A549 (cell line): ENCODE measurements at regions of chr5 and their contacts with region 1.

Region 1: GRCh38 chr5:159106569-159107282 is 7.0 kb upstream of the EBF1 start:
- DNase-seq: peak; percentile 73 to 90
- ATAC-seq: peak; percentile 89 to 94
- H3K4me3 ChIP-seq: peak overlapping the region; percentile 29
- H3K27ac ChIP-seq: peak overlapping the region in 1 of 2 experiments; percentile 46; a peak in 3 of 6 replicates
- H3K4me1 ChIP-seq: no peaks in the 10 kb centered on the region; the same call in 1 of the 3 replicates
- CTCF ChIP-seq: peak; percentile 97
- EP300 ChIP-seq: no peak
- POLR2A ChIP-seq: no peak
- RAD21 ChIP-seq: peak; percentile 97 to 99

Region 2: GRCh38 chr5:158007336-158007735 is 1099.4 kb before region 1 on chr5:
- CTCF ChIA-PET with region 1: interaction called, 16 read pairs
- POLR2A ChIA-PET with region 1: no interaction called
- DNase-seq: no peak
- ATAC-seq: no peak; a peak in 1 of 6 replicates
- H3K4me3 ChIP-seq: no peak overlapping the region
- H3K27ac ChIP-seq: no peak overlapping the region
- H3K4me1 ChIP-seq: no peaks in the 10 kb centered on the region
- CTCF ChIP-seq: no peak
- EP300 ChIP-seq: no peak
- POLR2A ChIP-seq: no peak
- RAD21 ChIP-seq: no peak

Region 3: DNA sequence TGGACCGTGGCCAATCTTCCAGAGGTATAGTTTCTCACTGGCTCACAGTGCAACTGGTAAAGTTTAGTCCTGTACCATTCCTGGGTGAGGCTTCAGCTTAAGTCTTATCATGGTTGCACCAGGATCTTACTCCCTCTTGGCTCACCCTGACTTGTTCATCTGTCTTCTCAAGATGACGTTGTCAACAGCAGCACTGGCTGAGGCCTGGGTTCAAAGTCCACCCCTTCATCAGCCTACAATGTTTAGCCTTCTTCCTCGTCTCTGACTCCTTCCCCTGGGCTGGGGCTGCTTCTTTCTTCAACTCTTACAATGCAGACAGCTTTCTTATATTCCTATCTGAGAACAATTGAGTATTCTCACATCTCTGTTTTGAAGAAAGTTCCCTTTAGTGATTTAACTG is 936.7 kb before region 1 on chr5:
- CTCF ChIA-PET with region 1: interaction called, 49 read pairs
- POLR2A ChIA-PET with region 1: no interaction called
- DNase-seq: peak in 1 of 2 experiments; percentile 18
- ATAC-seq: peak in 1 of 2 experiments; percentile 28; a peak in 2 of 6 replicates
- H3K4me3 ChIP-seq: no peak overlapping the region
- H3K27ac ChIP-seq: no peak overlapping the region
- H3K4me1 ChIP-seq: no peaks in the 10 kb centered on the region
- CTCF ChIP-seq: no peak
- EP300 ChIP-seq: no peak
- POLR2A ChIP-seq: no peak
- RAD21 ChIP-seq: no peak

Region 4: GRCh38 chr5:158679221-158679641 is 427.5 kb before region 1 on chr5:
- CTCF ChIA-PET with region 1: interaction called, 10 read pairs
- POLR2A ChIA-PET with region 1: no interaction called
- DNase-seq: no peak
- ATAC-seq: no peak
- H3K4me3 ChIP-seq: no peak overlapping the region
- H3K27ac ChIP-seq: no peak overlapping the region
- H3K4me1 ChIP-seq: no peaks in the 10 kb centered on the region
- CTCF ChIP-seq: no peak
- EP300 ChIP-seq: no peak
- POLR2A ChIP-seq: no peak
- RAD21 ChIP-seq: no peak

Region 5: DNA sequence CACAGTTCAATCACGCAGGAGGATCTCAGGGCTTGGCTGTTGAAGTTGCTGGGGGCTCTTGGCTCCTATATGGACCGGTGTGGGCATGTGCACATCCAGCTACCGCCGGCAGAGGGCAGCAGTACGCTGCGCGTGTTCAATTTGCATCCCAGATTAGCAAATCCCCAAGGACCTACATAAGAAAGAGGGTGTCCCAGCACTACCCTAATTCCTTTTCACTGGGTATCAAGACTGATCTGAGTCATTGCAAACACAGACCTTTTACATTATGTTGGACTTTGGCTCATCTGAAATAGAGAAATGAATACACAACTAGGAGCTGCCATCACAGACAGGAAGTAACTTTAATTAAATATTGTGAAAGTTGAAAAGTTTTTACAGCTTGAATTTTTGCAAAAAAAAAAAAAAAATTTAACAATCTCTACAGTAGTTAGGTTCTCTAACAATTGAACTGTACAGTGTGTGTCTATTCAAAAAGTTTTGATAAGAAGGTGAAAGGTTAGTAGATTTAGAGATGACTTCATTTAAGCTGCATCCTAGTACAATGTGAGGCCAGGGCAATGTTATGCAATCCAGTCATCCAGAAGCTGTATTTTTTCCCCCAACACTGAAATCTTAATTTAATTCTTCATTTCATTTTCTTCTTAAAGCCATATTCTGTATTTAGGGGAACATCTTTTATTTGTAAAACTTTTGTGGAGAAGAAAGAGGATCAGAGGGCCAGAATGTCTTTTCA is 411.0 kb before region 1 on chr5:
- CTCF ChIA-PET with region 1: interaction called, 461 read pairs
- POLR2A ChIA-PET with region 1: interaction called, 5 read pairs
- DNase-seq: peak; percentile 75 to 91
- ATAC-seq: peak; percentile 96 to 97
- H3K4me3 ChIP-seq: no peak overlapping the region
- H3K27ac ChIP-seq: peak overlapping the region; percentile 60 to 71; a peak in 5 of 6 replicates
- H3K4me1 ChIP-seq: peaks cover 47% of the 10 kb centered on the region
- CTCF ChIP-seq: peak; percentile 98
- EP300 ChIP-seq: no peak; a peak in 1 of 5 replicates
- POLR2A ChIP-seq: no peak
- RAD21 ChIP-seq: peak; percentile 97 to 99

Region 6: DNA sequence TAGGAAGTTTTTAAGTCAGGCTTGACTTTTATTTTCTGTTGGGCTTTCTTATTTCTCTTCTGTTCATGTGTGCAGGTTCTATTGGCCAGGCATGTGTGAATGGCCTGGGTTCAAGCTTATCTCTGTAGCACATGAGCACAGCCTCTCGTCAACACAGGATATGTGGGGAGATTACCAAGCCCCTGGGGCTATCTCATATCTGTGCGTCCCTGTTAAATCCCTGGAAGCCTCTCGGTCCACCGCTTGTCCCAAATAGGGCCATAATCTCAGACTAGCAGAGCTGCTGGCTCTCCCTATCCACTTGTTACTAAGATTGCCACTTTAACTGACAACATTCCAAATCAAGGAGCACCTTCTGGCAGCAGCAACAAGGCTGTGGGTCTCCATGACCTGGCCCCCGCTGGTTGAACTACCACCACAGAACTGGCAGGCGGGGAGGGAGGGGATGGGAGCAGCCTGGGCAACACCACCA is 21.4 kb after region 1 on chr5:
- CTCF ChIA-PET with region 1: interaction called, 20 read pairs
- POLR2A ChIA-PET with region 1: no interaction called
- DNase-seq: no peak
- ATAC-seq: no peak
- H3K4me3 ChIP-seq: no peak overlapping the region
- H3K27ac ChIP-seq: no peak overlapping the region
- H3K4me1 ChIP-seq: peaks cover 9% of the 10 kb centered on the region
- CTCF ChIP-seq: no peak
- EP300 ChIP-seq: no peak
- POLR2A ChIP-seq: no peak
- RAD21 ChIP-seq: no peak